Activated CD8-positive, alpha-beta T cell treated with anti-CD3 and anti-CD28 coated beads for 36 hours (primary cell): ENCODE measurements at regions of chr4 and their contacts with region 1.

Region 1: GRCh38 chr4:118224239-118224829 is 128.5 kb downstream of the PRSS12 start:
- DNase-seq: no peak
- ATAC-seq: no peak
- H3K4me3 Mint-ChIP-seq: no peak overlapping the region
- H3K27ac Mint-ChIP-seq: no peak overlapping the region
- H3K4me1 Mint-ChIP-seq: no peaks in the 10 kb centered on the region
- H3K27me3 Mint-ChIP-seq: peaks cover 3% of the 10 kb centered on the region
- CTCF ChIP-seq: peak; percentile 77

Region 2: DNA sequence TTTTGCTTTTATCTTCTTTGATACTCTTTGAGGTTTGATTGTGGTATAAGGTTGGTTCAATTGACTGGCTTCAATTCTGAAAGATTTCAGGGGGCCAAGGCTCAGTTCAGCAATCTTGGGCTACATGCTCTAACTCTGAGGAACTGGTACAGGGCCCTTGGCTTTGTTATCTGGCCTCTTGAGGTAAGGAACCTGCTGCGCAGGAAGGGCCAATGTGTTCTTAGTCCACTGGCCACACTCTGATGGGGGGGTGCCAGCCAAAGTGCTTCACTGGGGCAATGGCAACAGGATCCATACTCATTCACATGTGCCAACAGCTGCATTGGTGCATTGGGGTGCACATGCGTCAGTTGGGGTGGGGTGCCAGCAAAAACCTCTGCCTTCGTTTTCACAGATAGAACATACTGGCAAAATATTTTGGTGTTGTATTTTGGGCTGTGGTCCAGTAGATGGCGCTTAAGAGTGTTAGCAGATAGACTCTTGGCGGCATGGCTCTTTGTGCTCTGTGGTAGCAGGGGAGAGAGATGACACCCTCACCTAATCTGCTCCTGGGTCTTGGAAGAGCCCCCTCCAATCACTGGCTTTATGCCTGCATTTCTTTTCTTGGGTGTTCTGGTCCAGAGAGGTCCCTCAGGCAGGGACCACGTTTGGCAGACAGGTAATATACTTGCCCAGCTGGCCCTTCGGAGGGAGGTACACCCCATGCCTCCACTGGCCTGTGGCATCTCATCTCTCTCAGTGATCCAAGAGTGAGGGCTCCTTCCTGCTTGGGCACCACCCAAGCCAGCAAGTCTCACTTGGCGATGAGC is 147.2 kb before region 1 on chr4:
- CTCF ChIA-PET with region 1: no interaction called
- POLR2A ChIA-PET with region 1: no interaction called
- intact Hi-C with region 1: loop called (anchors 5 kb)
- DNase-seq: peak; percentile 38
- ATAC-seq: peak; percentile 53
- H3K4me3 Mint-ChIP-seq: no peak overlapping the region
- H3K27ac Mint-ChIP-seq: no peak overlapping the region
- H3K4me1 Mint-ChIP-seq: no peaks in the 10 kb centered on the region
- H3K27me3 Mint-ChIP-seq: no peaks in the 10 kb centered on the region
- CTCF ChIP-seq: peak; percentile 46

Region 3: DNA sequence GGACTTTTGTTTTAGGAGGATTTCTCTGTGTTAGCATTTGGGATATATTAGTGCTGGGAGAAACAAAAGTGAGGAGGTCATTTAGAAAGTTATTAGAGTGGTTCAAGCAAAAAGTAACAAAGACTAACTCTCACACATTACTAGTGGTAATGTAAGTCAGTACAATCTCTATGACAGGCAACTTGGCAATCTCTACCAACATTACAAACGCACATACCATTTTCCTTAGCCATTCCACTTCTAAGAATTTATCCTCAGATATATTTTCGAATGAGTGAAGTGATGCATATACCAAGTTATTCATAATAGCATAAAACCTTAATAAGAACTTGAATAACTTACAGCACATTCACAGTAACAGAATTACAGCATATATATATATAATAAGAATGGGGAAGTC is 17.7 kb before region 1 on chr4:
- CTCF ChIA-PET with region 1: interaction called, 12 read pairs
- POLR2A ChIA-PET with region 1: no interaction called
- intact Hi-C with region 1: no loop called
- DNase-seq: no peak
- ATAC-seq: no peak
- H3K4me3 Mint-ChIP-seq: no peak overlapping the region
- H3K27ac Mint-ChIP-seq: no peak overlapping the region
- H3K4me1 Mint-ChIP-seq: no peaks in the 10 kb centered on the region
- H3K27me3 Mint-ChIP-seq: no peaks in the 10 kb centered on the region
- CTCF ChIP-seq: no peak

Region 4: GRCh38 chr4:118235566-118236120 is 11.3 kb after region 1 on chr4:
- CTCF ChIA-PET with region 1: interaction called, 20 read pairs
- POLR2A ChIA-PET with region 1: interaction called, 3 read pairs
- intact Hi-C with region 1: no loop called
- DNase-seq: no peak
- ATAC-seq: no peak
- H3K4me3 Mint-ChIP-seq: no peak overlapping the region
- H3K27ac Mint-ChIP-seq: no peak overlapping the region
- H3K4me1 Mint-ChIP-seq: no peaks in the 10 kb centered on the region
- H3K27me3 Mint-ChIP-seq: no peaks in the 10 kb centered on the region
- CTCF ChIP-seq: no peak

Region 5: DNA sequence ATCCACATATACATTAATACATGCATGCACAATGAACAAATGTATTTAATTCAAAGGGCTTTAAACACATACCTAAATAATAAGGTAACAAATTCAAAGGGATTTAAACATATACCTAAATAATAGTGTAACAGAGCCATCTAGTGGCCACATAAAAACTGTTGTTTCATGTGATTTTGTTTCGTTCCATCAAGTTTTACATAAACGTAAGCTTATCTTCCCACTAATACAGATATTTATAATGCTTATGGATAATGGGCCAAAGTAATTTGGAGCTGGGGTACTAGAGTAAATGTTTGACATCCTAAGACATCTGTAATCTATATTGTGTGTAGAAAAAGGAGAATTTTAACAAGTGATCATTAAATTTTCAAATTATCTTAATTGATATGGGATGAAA is 46.2 kb after region 1 on chr4:
- CTCF ChIA-PET with region 1: interaction called, 15 read pairs
- POLR2A ChIA-PET with region 1: no interaction called
- intact Hi-C with region 1: no loop called
- DNase-seq: no peak
- ATAC-seq: no peak
- H3K4me3 Mint-ChIP-seq: no peak overlapping the region
- H3K27ac Mint-ChIP-seq: no peak overlapping the region
- H3K4me1 Mint-ChIP-seq: peaks cover 2% of the 10 kb centered on the region
- H3K27me3 Mint-ChIP-seq: peaks cover 4% of the 10 kb centered on the region
- CTCF ChIP-seq: peak; percentile 72

Region 6: GRCh38 chr4:118281611-118282442 is 57.5 kb after region 1 on chr4:
- CTCF ChIA-PET with region 1: no interaction called
- POLR2A ChIA-PET with region 1: no interaction called
- intact Hi-C with region 1: no loop called
- DNase-seq: no peak
- ATAC-seq: no peak
- H3K4me3 Mint-ChIP-seq: peak overlapping the region; percentile 80
- H3K27ac Mint-ChIP-seq: peak overlapping the region; percentile 86
- H3K4me1 Mint-ChIP-seq: peaks cover 30% of the 10 kb centered on the region
- H3K27me3 Mint-ChIP-seq: no peaks in the 10 kb centered on the region
- CTCF ChIP-seq: no peak